Dendritic cell treated with granulocyte-macrophage colony-stimulating factor and Interleukin-4, amounts not matched to agents 40 ng/mL and 50 ng/mL, for 4 days (primary cell): ENCODE measurements at regions of chr6 and their contacts with region 1.

Region 1: DNA sequence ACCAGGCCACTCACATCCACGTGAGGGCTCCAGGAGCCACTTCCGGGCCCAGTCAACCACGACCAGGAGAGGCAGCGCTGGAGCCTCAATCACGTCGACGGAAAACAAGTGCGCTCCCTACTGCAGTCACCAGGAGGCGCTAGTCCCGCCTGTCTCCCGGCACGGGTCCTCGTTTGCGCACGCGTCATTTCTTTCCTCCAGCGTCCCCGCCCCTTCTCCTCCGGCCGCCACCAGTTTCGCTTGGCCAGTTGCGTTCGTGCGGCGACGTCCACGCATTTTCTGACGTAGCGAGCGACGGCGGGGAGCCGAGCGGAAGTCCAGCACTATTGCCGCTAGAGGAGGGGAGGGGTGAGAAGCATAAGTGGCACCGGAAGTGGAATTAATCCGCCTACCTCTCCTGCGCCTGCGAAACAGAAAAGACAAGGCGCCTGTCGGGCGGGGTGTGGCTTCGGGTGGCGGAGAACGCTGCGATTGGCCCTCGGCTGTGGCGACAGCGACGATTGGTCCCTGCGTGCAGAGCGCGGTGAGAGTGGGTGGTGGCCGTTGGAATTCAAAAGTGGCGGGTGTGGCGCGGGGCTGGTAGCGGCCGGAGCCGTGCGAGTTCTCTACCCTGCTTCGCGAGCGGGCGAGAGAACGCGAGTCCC is at the start of gene KIFC1:
- H3K4me3 Mint-ChIP-seq: peak within 1 kb of the TSS; percentile 82
- H3K27ac Mint-ChIP-seq: peak within 1 kb of the TSS; percentile 85
- H3K4me1 Mint-ChIP-seq: peaks cover 28% of the 10 kb centered on the region
- H3K27me3 Mint-ChIP-seq: no peaks in the 10 kb centered on the region

Region 2: DNA sequence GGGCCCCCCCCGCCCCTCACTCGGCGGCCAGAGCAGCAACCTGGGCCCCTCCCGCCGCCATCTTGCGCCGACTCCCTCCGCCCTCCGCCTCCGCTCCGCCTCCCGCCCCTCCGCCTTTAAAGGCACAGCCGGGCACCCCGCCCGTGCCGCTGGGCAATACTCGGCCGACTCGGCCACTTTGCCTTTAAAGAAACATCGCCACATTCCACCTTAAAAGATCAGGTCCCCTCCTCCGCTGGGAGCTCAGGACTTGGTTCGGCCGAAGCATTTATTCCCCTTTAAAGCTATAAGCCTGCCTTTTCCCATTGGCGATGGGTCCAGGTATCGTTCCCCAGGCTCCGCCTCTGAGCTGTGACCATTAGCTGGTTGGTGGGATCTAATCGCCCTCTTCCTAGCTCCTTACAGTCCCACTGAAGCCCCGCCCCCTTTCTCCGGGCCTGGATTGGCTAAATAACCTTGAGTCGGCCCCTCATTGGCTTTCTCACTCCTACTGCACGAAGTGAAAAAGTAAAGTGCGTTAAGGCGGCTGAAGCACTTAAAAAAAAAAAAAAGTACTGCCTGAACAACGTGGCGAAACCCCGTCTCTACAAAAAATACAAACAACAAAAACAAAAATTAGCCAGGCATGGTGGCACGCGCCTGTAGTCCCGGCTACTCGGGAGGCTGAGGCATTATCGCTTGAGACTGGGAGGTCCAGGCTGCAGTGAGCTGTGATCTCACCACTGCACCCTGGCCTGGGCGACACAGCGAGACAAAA is 73.6 kb before region 1 on chr6 and contains the start of gene ZBTB22:
- intact Hi-C with region 1: no loop called
- H3K4me3 Mint-ChIP-seq: peak within 1 kb of the TSS; percentile 92
- H3K27ac Mint-ChIP-seq: peak within 1 kb of the TSS; percentile 98
- H3K4me1 Mint-ChIP-seq: peaks cover 77% of the 10 kb centered on the region
- H3K27me3 Mint-ChIP-seq: no peaks in the 10 kb centered on the region

Region 3: DNA sequence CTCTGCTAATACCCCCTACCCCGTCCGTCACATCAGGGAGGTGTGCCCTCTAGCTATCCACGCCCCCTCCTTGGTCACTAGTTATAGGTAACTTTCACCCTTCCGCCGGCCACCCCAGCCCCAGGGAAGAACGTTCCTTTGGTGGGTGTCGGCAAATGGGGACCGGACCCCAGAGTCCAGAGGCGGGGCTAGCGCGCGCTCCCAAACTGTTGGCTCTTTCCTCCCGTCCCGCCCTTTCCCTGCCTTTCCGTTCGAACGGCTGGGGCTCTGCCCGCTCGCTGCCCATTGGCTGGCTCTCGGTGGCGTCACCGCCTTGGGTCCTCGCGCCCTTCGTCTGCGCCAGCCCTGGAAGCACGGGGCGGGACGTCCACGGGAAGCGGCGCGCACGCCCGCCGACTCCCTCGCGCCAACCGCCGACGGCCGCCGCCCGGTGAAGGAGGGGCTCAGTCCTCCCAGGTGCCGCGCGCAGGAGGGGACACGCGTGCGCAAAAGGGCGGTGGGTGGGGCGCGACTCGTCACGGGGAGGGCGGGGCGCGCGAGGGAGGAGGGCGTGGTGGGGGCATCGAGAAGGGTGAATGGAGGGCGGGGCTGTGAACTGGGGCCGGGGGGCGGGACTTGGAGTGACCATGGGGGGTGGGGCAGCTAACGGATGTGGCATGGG is 18.8 kb after region 1 on chr6:
- intact Hi-C with region 1: loop called (anchors 1 kb)
- H3K4me3 Mint-ChIP-seq: peak overlapping the region; percentile 82
- H3K27ac Mint-ChIP-seq: peak overlapping the region; percentile 94
- H3K4me1 Mint-ChIP-seq: peaks cover 40% of the 10 kb centered on the region
- H3K27me3 Mint-ChIP-seq: no peaks in the 10 kb centered on the region

Region 4: GRCh38 chr6:33425668-33426577 is 34.5 kb after region 1 on chr6:
- intact Hi-C with region 1: loop called (anchors 1 kb)
- H3K4me3 Mint-ChIP-seq: peak overlapping the region; percentile 82
- H3K27ac Mint-ChIP-seq: peak overlapping the region; percentile 87
- H3K4me1 Mint-ChIP-seq: peaks cover 59% of the 10 kb centered on the region
- H3K27me3 Mint-ChIP-seq: peaks cover 35% of the 10 kb centered on the region